AG04450 (cell line): ENCODE measurements at regions of chr16 and their contacts with region 1.

Region 1: DNA sequence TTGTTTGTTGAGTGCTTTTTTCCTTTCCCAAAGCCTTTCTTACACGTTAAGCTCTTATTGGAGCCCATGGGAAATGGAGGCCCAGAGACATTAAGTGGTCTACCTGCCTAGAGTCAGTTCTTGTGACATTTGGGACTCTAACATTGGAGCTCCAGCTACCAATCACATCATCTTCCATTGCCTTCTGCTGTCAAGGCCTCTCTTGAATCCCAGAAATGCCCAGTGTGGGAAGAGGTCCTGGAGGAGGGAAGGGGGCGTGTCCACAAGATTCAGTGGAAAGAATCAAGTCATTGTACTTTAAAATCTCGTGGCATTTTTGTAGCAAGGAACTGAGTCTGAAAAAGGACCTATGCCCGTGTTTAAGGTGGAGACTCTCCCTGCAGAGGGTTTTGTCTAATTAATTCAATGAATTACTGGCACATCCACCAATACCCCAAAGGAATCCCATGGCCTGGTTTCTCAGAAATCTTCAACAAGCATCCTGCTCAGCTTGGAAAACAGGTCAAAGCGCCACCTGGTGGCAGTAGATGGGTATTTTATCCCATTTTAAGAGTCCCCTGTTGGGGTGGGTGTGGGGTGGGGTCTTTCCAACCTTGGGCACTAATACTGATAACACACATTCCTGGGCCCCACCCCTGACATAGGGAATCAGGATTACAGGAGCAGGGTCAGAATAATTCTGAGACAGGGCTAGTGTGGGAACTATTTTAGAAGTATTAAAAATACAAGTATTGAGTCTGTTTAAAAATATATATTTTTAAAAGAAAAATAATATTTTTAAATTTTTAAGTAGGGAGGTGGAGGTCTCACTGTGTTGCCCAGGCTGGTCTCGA is 24.6 kb downstream of the GPT2 start:
- DNase-seq: peak; percentile 30
- H3K4me3 ChIP-seq: no peak overlapping the region
- H3K27ac ChIP-seq: no peak overlapping the region
- H3K27me3 ChIP-seq: no peaks in the 10 kb centered on the region
- CTCF ChIP-seq: peak; percentile 67

Region 2: DNA sequence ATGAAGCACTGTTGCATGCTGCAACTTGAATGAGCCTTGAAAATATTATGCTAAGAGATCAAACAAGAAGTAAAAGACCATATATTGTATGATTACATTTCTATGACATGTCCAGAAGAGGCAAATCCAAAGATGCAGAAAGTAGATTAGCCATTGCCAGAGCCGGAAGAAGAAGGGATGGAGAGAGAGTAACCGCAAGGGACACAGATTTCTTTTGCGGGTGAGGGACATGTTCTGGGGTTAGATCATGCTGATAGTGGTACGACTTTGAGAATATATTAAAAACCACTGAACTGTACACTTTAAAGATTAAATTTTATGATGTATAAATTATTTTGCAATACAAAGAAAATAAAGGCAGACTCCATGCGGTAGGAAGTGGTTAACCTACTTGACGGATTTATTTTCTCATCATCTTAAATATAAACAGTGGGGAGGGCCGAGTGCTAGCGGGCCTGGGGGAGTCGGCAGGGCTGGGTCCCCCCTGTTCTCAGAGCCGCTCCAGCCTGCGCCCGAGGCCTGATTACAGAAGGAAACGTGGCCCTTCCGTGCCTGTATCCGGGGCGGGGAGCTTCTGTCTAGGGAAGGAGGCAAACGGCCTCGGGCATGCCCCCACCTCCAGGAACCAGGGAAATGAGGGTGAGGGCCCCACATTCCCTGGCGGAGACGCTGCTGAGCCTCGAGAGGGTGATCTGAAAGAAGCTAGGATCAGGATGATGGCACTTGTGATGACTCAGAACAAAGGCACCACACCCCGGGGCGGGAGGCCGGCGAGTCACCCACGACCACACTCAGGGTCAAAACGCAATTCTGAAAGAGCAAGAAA is 335.5 kb before region 1 on chr16:
- CTCF ChIA-PET with region 1: interaction called, 10 read pairs
- POLR2A ChIA-PET with region 1: no interaction called
- DNase-seq: no peak
- H3K4me3 ChIP-seq: no peak overlapping the region
- H3K27ac ChIP-seq: peak overlapping the region; percentile 39
- H3K27me3 ChIP-seq: no peaks in the 10 kb centered on the region
- CTCF ChIP-seq: no peak

Region 3: GRCh38 chr16:46883690-46884512 is 24.9 kb before region 1 on chr16 and contains the start of gene GPT2:
- CTCF ChIA-PET with region 1: interaction called, 28 read pairs
- POLR2A ChIA-PET with region 1: no interaction called
- DNase-seq: peak; percentile 84
- H3K4me3 ChIP-seq: peak within 1 kb of the TSS; percentile 92
- H3K27ac ChIP-seq: peak within 1 kb of the TSS; percentile 65
- H3K27me3 ChIP-seq: peaks cover 6% of the 10 kb centered on the region
- CTCF ChIP-seq: no peak
- polyA plus RNA-seq, gene GPT2: 18.5 and 23.0 TPM in 2 replicates